SK-N-SH (cell line): ENCODE measurements at regions of chr11 and their contacts with region 1.

Region 1: GRCh38 chr11:111299101-111300026 is 1.0 kb downstream of the POU2AF3 start:
- DNase-seq: peak; percentile 92
- H3K4me3 ChIP-seq: peak overlapping the region; percentile 54 to 60
- H3K27ac ChIP-seq: no peak overlapping the region
- H3K4me1 ChIP-seq: peaks cover 5% of the 10 kb centered on the region in 2 experiments; a peak in 2 of 4 replicates
- H3K27me3 ChIP-seq: peaks cover 27% of the 10 kb centered on the region; the same call in 1 of the 2 replicates
- CTCF ChIP-seq: peak; percentile 60
- EP300 ChIP-seq: no peak
- RAD21 ChIP-seq: peak; percentile 58

Region 2: DNA sequence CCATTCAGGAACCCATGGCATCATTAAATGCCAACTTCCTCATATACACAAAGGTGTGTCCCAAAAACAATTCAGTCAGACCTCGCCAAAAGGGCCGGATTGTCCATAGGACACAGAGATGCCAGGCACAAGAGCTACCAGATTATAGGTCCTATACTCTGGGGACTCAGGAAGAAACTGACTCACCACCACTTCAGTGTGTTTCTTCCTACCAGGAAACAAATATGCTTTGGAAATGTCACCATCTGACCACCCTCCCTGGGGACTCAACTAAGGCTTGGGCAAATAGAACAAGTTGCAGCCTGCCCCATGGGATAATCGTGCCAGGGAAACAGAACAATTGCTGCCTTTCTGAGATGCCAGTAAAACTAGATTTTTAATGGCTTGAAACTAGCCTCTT is 10.7 kb after region 1 on chr11:
- CTCF ChIA-PET with region 1: interaction called, 22 read pairs
- POLR2A ChIA-PET with region 1: no interaction called
- DNase-seq: no peak
- H3K4me3 ChIP-seq: no peak overlapping the region
- H3K27ac ChIP-seq: no peak overlapping the region
- H3K4me1 ChIP-seq: peaks cover 0 to 4% of the 10 kb centered on the region in 2 experiments; a peak in 1 of 4 replicates
- H3K27me3 ChIP-seq: peaks cover 16% of the 10 kb centered on the region; the same call in 1 of the 2 replicates
- CTCF ChIP-seq: no peak
- EP300 ChIP-seq: no peak
- RAD21 ChIP-seq: no peak

Region 3: GRCh38 chr11:111327908-111328624 is 28.7 kb after region 1 on chr11:
- CTCF ChIA-PET with region 1: interaction called, 14 read pairs
- POLR2A ChIA-PET with region 1: no interaction called
- DNase-seq: no peak
- H3K4me3 ChIP-seq: no peak overlapping the region
- H3K27ac ChIP-seq: no peak overlapping the region
- H3K4me1 ChIP-seq: peaks cover 12 to 27% of the 10 kb centered on the region in 2 experiments; a peak in 3 of 4 replicates
- H3K27me3 ChIP-seq: no peaks in the 10 kb centered on the region
- CTCF ChIP-seq: no peak
- EP300 ChIP-seq: no peak
- RAD21 ChIP-seq: no peak

Region 4: DNA sequence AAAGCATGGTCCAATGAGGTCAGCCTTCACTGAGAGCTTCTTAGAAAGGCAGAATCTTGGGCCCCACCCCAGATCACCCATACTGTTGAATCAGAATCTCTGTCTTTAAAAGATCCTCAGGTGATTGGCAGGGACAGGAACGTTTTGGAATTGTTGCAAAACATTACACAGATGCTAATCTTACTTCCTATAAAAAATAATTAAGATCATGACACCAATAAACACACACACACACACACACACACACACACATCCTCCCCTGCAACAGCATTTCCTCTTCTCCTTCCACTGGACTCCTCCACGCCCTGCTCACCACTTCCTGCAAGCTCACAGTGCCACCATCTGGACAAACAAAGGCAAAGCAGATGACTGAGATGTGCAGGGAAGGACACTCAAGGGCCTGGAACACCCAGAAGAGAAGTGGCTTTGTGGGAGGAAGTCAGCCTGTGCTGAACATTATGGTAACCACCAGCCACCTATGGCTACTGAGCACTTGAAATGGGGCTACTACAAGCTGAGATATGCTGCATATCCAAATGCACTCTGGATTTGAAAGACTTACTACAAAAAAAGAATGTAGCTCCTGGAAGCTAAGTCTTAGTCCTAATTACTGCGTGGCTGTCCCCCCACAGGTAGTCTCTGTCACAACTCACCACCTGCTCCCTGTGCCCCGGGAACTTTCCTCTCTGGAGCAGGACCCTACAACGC is 147.2 kb after region 1 on chr11:
- CTCF ChIA-PET with region 1: interaction called, 12 read pairs
- POLR2A ChIA-PET with region 1: no interaction called
- DNase-seq: peak; percentile 86
- H3K4me3 ChIP-seq: no peak overlapping the region; a peak in 1 of 4 replicates
- H3K27ac ChIP-seq: no peak overlapping the region
- H3K4me1 ChIP-seq: peaks cover 0 to 5% of the 10 kb centered on the region in 2 experiments; a peak in 1 of 4 replicates
- H3K27me3 ChIP-seq: no peaks in the 10 kb centered on the region
- CTCF ChIP-seq: peak; percentile 87
- EP300 ChIP-seq: no peak
- RAD21 ChIP-seq: peak; percentile 97